ENCODE measurements at regions of chr3 and their contacts with region 1.

Region 1: GRCh38 chr3:12484198-12484974 is at the start of gene TSEN2:
- DNase-seq: peak; percentile 99
- H3K4me3 ChIP-seq: peak within 1 kb of the TSS; percentile 68 to 96 (median 92)
- H3K27ac ChIP-seq: peak within 1 kb of the TSS; percentile 63 to 89 (median 82)
- H3K4me1 ChIP-seq: peaks cover 16 to 57% (median 38%) of the 10 kb centered on the region in 6 donors
- H3K27me3 ChIP-seq: no peaks in the 10 kb centered on the region
- CTCF ChIP-seq: peak in 4 of 11 experiments; percentile 14 to 42 (median 24)
- POLR2A ChIP-seq: peak in 2 of 3 donors; percentile 54 to 90
- total RNA-seq, gene TSEN2: 10.6 to 21.5 (median 17.8) TPM

Region 2: DNA sequence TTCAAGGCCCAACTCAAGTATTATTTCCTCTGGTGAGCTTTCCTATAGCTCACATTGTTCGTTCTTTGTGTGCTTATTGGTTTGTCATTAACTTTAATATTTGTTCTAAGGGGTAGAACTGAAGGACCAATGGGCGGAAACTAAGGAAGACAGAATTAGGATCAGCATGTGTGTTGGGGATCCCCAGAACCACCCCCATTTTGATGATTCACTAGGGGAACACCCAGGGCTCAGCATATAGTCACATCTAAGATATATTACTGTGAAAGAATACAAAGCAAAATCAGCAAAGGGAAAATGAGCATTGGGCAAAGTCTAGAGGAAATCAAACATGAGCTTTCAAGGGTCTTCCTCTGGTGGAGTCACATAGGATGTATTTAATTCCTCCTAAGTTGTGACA is 402.6 kb before region 1 on chr3:
- intact Hi-C with region 1: no loop called
- DNase-seq: no peak
- H3K4me3 ChIP-seq: no peak overlapping the region
- H3K27ac ChIP-seq: no peak overlapping the region
- H3K4me1 ChIP-seq: no peaks in the 10 kb centered on the region
- H3K27me3 ChIP-seq: peaks cover 0 to 10% (median 0%) of the 10 kb centered on the region in 7 donors
- CTCF ChIP-seq: no peak
- POLR2A ChIP-seq: no peak

Region 3: DNA sequence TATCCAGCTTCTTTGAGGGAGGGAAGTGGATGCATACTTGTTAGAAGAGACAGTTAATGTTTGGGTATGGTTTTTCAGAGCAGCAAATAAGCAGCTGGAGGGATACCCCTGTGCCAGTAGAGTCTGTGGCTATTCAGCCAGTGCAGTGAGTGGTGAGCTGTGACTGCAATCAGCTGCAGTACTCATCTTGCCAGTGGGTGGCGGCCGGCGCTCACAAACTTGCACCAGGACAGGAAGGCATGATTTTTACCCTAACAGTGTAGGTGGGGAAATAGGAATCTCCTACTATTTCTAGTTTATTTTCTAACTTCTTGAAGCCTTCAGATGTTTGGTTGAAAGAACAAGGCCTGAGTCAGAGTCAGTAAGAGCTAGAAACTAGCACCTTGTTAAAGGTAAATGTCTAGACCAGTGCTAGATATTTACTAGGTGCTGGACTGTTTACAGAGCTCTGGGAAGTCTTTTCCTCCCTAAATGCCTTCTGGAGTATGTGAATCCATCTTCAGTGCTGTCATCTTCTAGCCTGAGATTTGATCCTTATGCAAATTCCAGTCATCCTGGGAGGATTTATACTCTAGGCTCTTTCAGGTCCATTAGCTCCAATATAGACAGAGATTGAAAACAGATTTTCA is 349.2 kb before region 1 on chr3:
- intact Hi-C with region 1: loop called (anchors 5 kb)
- DNase-seq: peak; percentile 91
- H3K4me3 ChIP-seq: no peak overlapping the region
- H3K27ac ChIP-seq: no peak overlapping the region
- H3K4me1 ChIP-seq: peaks cover 0 to 16% (median 5%) of the 10 kb centered on the region in 6 donors
- H3K27me3 ChIP-seq: peaks cover 0 to 8% (median 0%) of the 10 kb centered on the region in 7 donors
- CTCF ChIP-seq: peak; percentile 65 to 92 (median 79)
- POLR2A ChIP-seq: no peak

Region 4: GRCh38 chr3:12287727-12288191 is 196.6 kb before region 1 on chr3:
- intact Hi-C with region 1: loop called (anchors 10 kb)
- DNase-seq: peak; percentile 85
- H3K4me3 ChIP-seq: peak overlapping the region; percentile 46 to 78 (median 54)
- H3K27ac ChIP-seq: peak overlapping the region; percentile 69 to 92 (median 86)
- H3K4me1 ChIP-seq: peaks cover 0 to 42% (median 23%) of the 10 kb centered on the region in 6 donors
- H3K27me3 ChIP-seq: peaks cover 0 to 59% (median 13%) of the 10 kb centered on the region in 7 donors
- CTCF ChIP-seq: no peak
- POLR2A ChIP-seq: no peak

Region 5: GRCh38 chr3:12556671-12557472 is 72.5 kb after region 1 on chr3 and contains the start of gene MKRN2:
- intact Hi-C with region 1: loop called (anchors 10 kb)
- DNase-seq: peak; percentile 98
- H3K4me3 ChIP-seq: peak within 1 kb of the TSS; percentile 65 to 93 (median 83)
- H3K27ac ChIP-seq: peak within 1 kb of the TSS; percentile 96 to 99 (median 97)
- H3K4me1 ChIP-seq: peaks cover 16 to 74% (median 57%) of the 10 kb centered on the region in 6 donors
- H3K27me3 ChIP-seq: peaks cover 0 to 43% (median 4%) of the 10 kb centered on the region in 7 donors
- CTCF ChIP-seq: no peak
- POLR2A ChIP-seq: peak; percentile 80 to 96 (median 94)
- total RNA-seq, gene MKRN2: 17.8 to 27.4 (median 21.3) TPM

Region 6: DNA sequence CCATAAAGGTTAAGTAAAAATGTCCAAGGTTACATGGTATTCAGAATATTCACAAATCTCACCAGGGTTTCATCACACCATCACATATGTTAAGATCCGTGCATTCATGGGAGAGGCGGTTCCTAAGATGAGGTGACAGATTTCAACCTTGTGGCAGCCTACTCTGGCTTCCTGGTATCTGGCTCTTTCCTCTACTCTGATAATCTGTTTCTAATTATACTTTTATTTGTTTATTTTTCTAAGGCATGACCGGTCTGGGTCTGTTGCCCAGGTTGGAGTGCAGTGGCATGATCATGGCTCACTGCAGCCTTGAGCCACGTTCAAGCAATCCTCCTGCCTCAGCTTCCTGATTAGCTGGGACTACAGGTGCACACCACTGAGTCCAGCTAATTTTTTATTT is 145.2 kb after region 1 on chr3:
- intact Hi-C with region 1: no loop called
- DNase-seq: no peak
- H3K4me3 ChIP-seq: no peak overlapping the region
- H3K27ac ChIP-seq: peak overlapping the region in 2 of 8 donors; percentile 5 to 17
- H3K4me1 ChIP-seq: peaks cover 10 to 96% (median 57%) of the 10 kb centered on the region in 6 donors
- H3K27me3 ChIP-seq: no peaks in the 10 kb centered on the region
- CTCF ChIP-seq: no peak
- POLR2A ChIP-seq: no peak